Right cardiac atrium (tissue), 5 donors: ENCODE measurements at regions of chr6 and their contacts with region 1.

Region 1: DNA sequence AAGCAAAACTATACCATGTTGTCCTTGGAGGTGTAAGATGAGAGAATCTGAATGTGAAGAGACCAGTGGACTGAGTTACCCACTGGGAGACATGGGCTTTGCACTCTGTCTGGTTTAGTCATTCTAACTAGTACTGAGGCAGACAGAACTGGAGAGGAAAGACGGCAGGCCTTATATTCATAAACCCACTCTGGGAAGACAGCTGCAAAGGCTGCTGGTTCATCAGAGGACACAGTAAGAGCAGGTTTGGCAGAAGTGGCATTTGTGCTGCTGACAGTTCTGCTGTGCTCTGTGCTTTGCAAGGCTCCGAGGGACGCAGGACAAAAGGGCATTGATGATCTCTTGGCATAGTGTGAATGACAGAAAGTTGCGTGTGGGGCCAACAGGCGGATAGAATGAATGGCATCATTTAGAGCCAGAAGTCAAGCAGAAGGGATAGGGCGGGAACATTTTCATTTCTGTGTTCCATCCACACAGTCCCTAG is 142.3 kb upstream of the TENT5A start:
- DNase-seq: peak; percentile 72 to 88 (median 85)
- ATAC-seq: peak; percentile 95
- H3K4me3 ChIP-seq: no peak overlapping the region
- H3K27ac ChIP-seq: peak overlapping the region; percentile 97
- H3K4me1 ChIP-seq: peaks cover 14% of the 10 kb centered on the region
- H3K27me3 ChIP-seq: no peaks in the 10 kb centered on the region

Region 2: DNA sequence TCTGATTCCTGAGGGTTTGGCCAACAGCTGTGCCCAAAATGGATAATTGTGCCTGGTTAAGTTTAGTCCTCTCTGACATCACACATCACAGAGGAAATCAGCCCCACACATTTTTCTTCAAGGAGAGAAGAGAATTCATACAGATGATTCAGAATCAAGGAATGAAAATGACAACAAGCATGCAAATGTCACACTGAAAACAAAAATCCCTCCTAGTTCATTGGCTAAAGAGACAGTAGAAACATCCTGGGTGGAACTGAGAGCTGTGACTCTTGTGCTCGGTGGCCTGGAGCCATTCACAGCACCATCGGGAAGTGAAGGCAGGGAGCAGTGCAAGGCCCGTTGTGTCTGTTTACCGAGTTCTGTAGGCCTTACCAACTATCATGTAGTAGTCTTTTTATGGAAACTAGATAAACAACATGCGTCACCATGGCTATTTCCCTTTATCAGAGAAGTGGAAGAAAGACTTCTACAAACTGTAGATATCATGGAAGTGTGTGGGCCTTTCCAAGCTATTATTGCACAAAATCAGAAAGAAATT is 60.6 kb before region 1 on chr6:
- intact Hi-C with region 1: loop called in 1 of 4 experiments (anchors 10 kb)
- DNase-seq: peak; percentile 73 to 81 (median 74)
- ATAC-seq: peak; percentile 95 to 99
- H3K4me3 ChIP-seq: no peak overlapping the region
- H3K27ac ChIP-seq: peak overlapping the region; percentile 93
- H3K4me1 ChIP-seq: no peaks in the 10 kb centered on the region
- H3K27me3 ChIP-seq: no peaks in the 10 kb centered on the region

Region 3: GRCh38 chr6:82017288-82017687 is 122.5 kb after region 1 on chr6:
- intact Hi-C with region 1: loop called in 1 of 4 experiments (anchors 10 kb)
- DNase-seq: peak in 2 of 3 donors; percentile 34 to 46
- ATAC-seq: peak; percentile 88 to 92
- H3K4me3 ChIP-seq: no peak overlapping the region
- H3K27ac ChIP-seq: peak overlapping the region; percentile 54
- H3K4me1 ChIP-seq: peaks cover 7% of the 10 kb centered on the region
- H3K27me3 ChIP-seq: no peaks in the 10 kb centered on the region